SK-N-SH (cell line): ENCODE measurements at regions of chr7 and their contacts with region 1.

Region 1: GRCh38 chr7:26398756-26399501 is 107.3 kb downstream of the SNX10 start:
- DNase-seq: peak; percentile 83
- H3K4me3 ChIP-seq: peak overlapping the region; percentile 58 to 63
- H3K27ac ChIP-seq: peak overlapping the region in 1 of 2 experiments; percentile 74; a peak in 2 of 4 replicates
- H3K4me1 ChIP-seq: peaks cover 0 to 21% of the 10 kb centered on the region in 2 experiments; a peak in 1 of 4 replicates
- H3K27me3 ChIP-seq: peaks cover 10% of the 10 kb centered on the region; the same call in 1 of the 2 replicates
- CTCF ChIP-seq: no peak
- EP300 ChIP-seq: no peak
- RAD21 ChIP-seq: peak; percentile 72

Region 2: GRCh38 chr7:26376175-26376917 is 22.6 kb before region 1 on chr7:
- CTCF ChIA-PET with region 1: interaction called, 50 read pairs
- POLR2A ChIA-PET with region 1: interaction called, 4 read pairs
- DNase-seq: peak; percentile 94
- H3K4me3 ChIP-seq: peak overlapping the region in 1 of 2 experiments; percentile 55; a peak in 2 of 4 replicates
- H3K27ac ChIP-seq: peak overlapping the region in 1 of 2 experiments; percentile 89; a peak in 2 of 4 replicates
- H3K4me1 ChIP-seq: peaks cover 0 to 5% of the 10 kb centered on the region in 2 experiments; a peak in 2 of 4 replicates
- H3K27me3 ChIP-seq: peaks cover 38% of the 10 kb centered on the region
- CTCF ChIP-seq: no peak
- EP300 ChIP-seq: no peak
- RAD21 ChIP-seq: no peak

Region 3: DNA sequence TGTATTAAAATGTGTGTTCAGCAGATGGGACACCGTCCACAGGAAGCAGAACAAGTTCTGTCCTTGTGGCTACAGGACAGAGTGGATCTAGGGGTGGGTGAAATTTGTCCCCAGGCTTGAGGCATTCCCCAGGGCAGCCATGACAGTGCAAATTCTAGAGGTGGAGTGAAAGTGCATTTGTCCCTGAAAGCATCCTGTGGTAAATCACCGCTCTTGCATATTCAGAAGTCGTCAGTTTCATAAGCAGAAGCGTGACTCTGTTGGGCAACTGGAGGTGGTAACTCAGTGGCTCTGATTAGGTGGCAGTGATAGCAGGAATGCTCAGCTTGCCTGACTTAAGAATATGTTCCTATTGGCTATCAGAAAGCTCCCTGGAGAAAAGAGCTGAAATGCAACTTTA is 10.7 kb before region 1 on chr7:
- CTCF ChIA-PET with region 1: interaction called, 12 read pairs
- POLR2A ChIA-PET with region 1: interaction called, 3 read pairs
- DNase-seq: no peak
- H3K4me3 ChIP-seq: no peak overlapping the region
- H3K27ac ChIP-seq: no peak overlapping the region
- H3K4me1 ChIP-seq: no peaks in the 10 kb centered on the region
- H3K27me3 ChIP-seq: peaks cover 5% of the 10 kb centered on the region; the same call in 1 of the 2 replicates
- CTCF ChIP-seq: no peak
- EP300 ChIP-seq: no peak
- RAD21 ChIP-seq: no peak

Region 4: DNA sequence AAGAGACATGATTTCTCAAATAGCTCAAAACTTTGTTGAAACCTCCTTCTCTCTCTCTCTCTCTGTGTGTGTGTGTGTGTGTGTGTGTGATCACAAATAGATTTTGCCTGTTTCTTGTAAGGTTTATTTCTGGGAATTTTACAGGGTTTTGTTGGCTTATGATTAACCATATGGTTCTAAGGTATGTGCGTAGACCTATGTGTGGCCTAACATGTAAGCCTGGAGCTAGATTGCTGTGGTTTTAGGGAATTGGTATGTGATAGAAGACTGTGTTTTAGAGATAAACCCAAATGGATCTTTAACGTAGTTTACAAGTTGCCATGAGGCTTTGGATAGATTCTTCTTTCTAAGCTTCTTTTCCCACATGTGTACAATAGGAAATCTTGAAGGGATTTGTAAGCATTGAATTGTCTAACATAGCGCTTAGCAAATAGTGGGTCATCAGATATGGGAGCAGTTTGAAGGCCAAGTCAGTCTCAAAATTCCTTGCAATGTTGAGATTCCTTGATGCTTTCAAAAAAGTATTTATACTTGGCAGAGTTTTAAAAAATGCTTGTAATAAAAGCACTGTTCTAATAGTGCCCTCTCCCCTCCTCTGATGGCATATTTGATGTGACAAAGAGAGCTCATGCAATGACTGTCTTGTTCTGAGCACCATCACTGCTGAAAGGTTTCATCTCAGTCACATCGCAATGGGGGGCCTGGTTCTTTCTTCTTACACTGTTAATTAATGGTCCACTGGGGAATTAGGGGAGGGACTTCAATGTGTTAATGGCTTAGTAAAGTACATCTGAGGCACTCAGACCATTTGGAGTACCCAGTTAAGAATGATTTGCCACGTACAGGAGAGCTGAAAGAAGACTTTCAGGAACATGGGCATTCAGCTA is 11.0 kb after region 1 on chr7:
- CTCF ChIA-PET with region 1: interaction called, 11 read pairs
- POLR2A ChIA-PET with region 1: interaction called, 3 read pairs
- DNase-seq: no peak
- H3K4me3 ChIP-seq: no peak overlapping the region
- H3K27ac ChIP-seq: no peak overlapping the region
- H3K4me1 ChIP-seq: no peaks in the 10 kb centered on the region; a peak in 1 of 4 replicates
- H3K27me3 ChIP-seq: no peaks in the 10 kb centered on the region
- CTCF ChIP-seq: no peak
- EP300 ChIP-seq: no peak
- RAD21 ChIP-seq: no peak

Region 5: DNA sequence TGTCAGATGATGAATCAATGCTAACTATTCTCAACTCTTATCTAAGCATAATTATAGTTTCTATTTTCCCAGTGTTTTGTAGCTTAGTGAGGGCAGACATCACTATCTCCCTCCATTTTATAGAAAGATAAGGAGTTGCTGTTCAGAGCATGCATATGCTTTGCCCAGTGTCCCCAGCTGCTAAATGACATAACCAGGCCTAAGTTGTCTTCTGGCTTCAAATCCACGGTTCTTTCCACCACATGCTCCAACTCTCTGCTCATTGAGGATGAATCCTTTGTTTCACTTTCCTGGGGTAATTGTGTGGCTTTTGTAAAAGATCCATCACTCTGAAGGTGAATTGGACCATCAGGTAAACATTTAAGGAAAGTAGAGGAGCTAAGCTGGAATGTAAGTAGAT is 26.7 kb after region 1 on chr7:
- CTCF ChIA-PET with region 1: interaction called, 10 read pairs
- POLR2A ChIA-PET with region 1: no interaction called
- DNase-seq: peak; percentile 28
- H3K4me3 ChIP-seq: no peak overlapping the region
- H3K27ac ChIP-seq: 0 out of 4 replicates have a peak overlapping the region, but pooled peaks of 1 of the 2 experiments have one; percentile 1
- H3K4me1 ChIP-seq: no peaks in the 10 kb centered on the region
- H3K27me3 ChIP-seq: no peaks in the 10 kb centered on the region
- CTCF ChIP-seq: no peak
- EP300 ChIP-seq: no peak
- RAD21 ChIP-seq: no peak

Region 6: DNA sequence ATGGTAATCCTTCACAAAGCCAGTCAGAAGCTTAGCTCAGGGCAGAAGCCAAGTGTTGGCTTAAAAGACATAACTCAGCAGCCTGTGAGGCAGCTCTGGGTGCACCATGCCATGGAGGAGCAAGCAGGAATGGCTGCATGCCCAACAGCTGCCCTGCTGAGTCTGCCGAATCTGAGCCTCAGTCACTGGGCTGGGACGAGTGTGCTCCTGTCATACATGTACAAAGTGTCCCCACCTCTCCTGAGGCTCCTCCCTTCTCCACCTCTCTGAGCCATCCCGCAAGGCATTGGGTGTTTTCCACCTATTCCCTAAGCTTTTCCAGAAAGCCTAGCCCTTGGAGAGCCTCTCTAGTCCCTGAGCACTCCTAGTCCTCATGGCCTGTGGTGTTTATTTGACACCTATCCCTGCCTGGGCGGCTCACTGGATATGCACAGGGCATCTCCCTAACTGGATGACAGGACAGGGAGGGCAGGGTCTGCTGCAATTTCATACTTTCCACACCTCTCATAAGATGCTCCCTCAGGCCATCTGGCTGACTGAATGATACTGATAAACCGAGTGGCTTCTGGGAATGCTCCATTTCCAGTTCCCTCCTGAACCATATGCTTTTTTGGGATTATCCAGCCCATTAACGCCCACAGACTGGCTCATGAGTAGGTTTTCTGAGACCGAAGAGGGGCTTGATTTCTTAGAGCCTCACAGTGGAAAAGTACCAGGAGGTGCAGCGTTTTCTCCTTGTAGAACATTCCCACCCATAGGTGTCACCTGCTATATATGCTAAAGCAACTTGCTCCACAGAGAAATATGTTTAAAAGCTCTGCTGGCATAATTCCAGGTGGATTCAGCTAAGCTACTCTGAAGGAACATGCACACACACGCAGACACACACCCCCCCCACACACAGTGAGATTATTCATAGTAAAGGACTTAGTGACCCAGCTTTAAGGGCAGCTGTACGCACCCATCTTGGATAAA is 92.0 kb after region 1 on chr7:
- CTCF ChIA-PET with region 1: interaction called, 14 read pairs
- POLR2A ChIA-PET with region 1: interaction called, 3 read pairs
- DNase-seq: peak; percentile 55
- H3K4me3 ChIP-seq: no peak overlapping the region
- H3K27ac ChIP-seq: no peak overlapping the region
- H3K4me1 ChIP-seq: peaks cover 0 to 27% of the 10 kb centered on the region in 2 experiments; a peak in 2 of 4 replicates
- H3K27me3 ChIP-seq: no peaks in the 10 kb centered on the region
- CTCF ChIP-seq: no peak
- EP300 ChIP-seq: no peak
- RAD21 ChIP-seq: no peak